ENCODE measurements at regions of chr6 and their contacts with region 1.

Region 1: GRCh38 chr6:7723041-7723447 is 2.9 kb upstream of the BMP6 start:
- DNase-seq: peak; percentile 82
- H3K4me3 ChIP-seq: no peak overlapping the region
- H3K27ac ChIP-seq: no peak overlapping the region
- H3K4me1 ChIP-seq: peaks cover 35% of the 10 kb centered on the region
- H3K27me3 ChIP-seq: peaks cover 62% of the 10 kb centered on the region
- CTCF ChIP-seq: peak; percentile 75

Region 2: DNA sequence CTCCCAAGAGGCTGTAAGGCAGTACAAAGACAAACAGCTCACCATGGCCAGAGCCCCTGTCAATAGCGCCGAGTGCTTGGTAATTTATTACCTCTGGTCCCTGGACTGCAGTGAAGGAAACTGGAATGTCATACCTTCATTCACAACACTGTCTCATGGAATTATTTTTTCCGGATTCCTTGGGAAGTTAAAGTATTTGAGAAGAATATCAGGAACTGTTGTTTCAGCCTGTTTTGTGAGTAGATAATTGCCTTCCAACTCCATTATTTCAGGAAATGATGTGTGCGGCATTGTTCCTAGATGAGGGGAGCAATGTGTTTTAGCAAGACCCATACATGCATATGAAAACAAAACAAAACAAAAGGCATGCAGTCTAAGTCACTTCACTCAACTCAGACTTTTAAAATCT is 277.1 kb after region 1 on chr6:
- intact Hi-C with region 1: loop called (anchors 5 kb)
- DNase-seq: no peak
- H3K4me3 ChIP-seq: no peak overlapping the region
- H3K27ac ChIP-seq: peak overlapping the region; percentile 45
- H3K4me1 ChIP-seq: peaks cover 11% of the 10 kb centered on the region
- H3K27me3 ChIP-seq: no peaks in the 10 kb centered on the region
- CTCF ChIP-seq: no peak

Region 3: GRCh38 chr6:8059129-8059528 is 336.1 kb after region 1 on chr6:
- intact Hi-C with region 1: loop called (anchors 5 kb)
- DNase-seq: no peak
- H3K4me3 ChIP-seq: no peak overlapping the region
- H3K27ac ChIP-seq: no peak overlapping the region
- H3K4me1 ChIP-seq: peaks cover 24% of the 10 kb centered on the region
- H3K27me3 ChIP-seq: no peaks in the 10 kb centered on the region
- CTCF ChIP-seq: peak; percentile 60

Measured in left ventricle myocardium inferior (tissue), 1 donor.